ENCODE measurements at regions of chr1 and their contacts with region 1.

Region 1: GRCh38 chr1:113140588-113141446 is 67.8 kb downstream of the LRIG2 start:
- DNase-seq: peak; percentile 14 to 36
- ATAC-seq: peak; percentile 56 to 79
- H3K4me3 ChIP-seq: peak overlapping the region in 1 of 4 donors; percentile 23
- H3K27ac ChIP-seq: no peak overlapping the region
- H3K4me1 ChIP-seq: peaks cover 13 to 16% of the 10 kb centered on the region in 2 donors
- H3K27me3 ChIP-seq: no peaks in the 10 kb centered on the region
- CTCF ChIP-seq: peak; percentile 58 to 79 (median 71)
- POLR2A ChIP-seq: no peak

Region 2: DNA sequence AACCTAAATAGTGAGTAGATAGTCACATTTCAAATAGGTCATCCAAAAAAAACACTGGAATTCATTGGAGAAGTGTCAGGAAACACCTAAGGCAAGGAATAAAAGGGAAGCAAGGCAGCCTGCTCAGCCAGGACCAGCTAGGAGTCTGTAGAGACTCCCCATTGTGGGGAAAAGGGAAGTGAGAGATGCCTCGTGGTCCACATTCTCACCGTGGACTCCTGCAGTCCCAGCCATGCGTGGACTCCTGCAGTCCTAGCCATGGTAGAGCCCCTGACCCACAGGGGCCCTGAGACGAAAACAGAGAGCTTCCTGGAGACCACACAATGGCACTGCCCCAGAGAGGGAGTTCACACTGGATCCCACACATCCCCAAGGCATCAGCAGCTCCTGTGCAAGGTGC is 29.7 kb after region 1 on chr1:
- in situ Hi-C with region 1: no loop called
- intact Hi-C with region 1: no loop called
- DNase-seq: no peak
- ATAC-seq: no peak
- H3K4me3 ChIP-seq: no peak overlapping the region
- H3K27ac ChIP-seq: no peak overlapping the region
- H3K4me1 ChIP-seq: no peaks in the 10 kb centered on the region
- H3K27me3 ChIP-seq: no peaks in the 10 kb centered on the region
- CTCF ChIP-seq: no peak
- POLR2A ChIP-seq: no peak

Region 3: DNA sequence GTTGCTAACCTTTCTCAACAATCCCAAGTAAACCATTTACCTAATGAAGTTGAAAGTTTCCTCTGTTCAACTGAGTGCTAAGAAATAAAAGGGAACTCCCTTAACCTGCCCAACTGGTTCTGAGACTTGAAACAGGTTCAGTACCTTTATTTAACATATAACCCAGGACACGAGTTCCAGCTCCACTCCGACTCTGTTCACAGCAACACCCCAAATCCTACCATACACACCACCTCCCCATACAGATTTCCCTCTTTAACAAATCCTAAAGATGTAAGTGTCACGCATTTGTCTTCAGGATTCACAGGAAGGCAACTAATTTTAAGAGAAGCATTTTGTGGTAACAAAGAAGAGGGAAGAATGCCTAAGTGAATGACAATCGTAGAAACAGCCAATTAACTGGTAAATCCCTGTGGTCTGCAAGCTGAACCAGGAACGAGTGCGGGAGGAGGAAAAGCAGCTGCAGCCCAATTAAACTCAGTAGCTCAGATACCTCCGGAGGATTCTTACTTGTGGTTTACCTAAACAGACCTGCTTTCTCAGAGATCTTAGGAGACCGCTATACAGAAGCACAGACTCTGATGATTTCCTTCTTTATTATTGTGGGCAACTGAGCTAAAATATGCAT is 115.0 kb after region 1 on chr1:
- in situ Hi-C with region 1: no loop called
- intact Hi-C with region 1: no loop called
- DNase-seq: no peak
- ATAC-seq: no peak
- H3K4me3 ChIP-seq: no peak overlapping the region
- H3K27ac ChIP-seq: no peak overlapping the region
- H3K4me1 ChIP-seq: no peaks in the 10 kb centered on the region
- H3K27me3 ChIP-seq: no peaks in the 10 kb centered on the region
- CTCF ChIP-seq: no peak
- POLR2A ChIP-seq: no peak

Region 4: DNA sequence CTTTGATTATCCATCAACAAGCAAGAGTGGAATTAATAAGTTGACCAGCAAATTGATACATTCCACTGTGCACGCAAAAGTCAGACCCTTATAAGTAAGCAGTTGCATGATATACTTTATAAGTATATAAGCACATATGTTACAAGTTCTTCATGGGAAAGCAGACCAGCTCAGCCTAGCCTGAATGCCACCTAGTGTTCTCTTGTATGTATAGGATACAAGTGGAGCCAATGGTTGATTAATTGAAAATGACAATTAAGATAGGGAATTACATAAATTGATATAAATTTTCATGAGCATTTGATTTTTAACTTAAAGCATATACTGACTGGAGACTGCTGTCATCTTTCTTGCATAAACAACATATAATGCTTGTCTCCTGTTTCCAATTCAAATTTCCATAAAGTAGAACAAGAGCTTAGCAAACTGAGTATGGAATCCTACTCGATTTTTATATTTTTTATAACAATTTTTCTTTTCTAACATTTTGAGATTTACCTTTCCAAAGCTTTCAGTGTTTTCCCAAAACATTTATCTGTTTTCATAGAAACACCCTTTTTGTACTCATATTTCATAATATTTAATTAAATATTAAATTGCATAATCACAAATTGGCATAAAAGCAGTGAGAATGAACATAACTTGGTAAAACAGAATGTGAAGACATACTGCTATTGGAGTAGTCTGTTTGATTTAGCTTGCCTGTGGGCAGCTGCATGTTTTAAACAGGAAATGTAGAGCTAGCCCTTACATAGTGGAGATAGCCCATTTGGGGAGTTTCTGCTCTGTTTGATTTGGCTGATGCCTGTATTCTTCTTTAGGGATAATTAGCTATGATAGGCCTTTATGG is 312.3 kb after region 1 on chr1:
- in situ Hi-C with region 1: loop called in 1 of 4 experiments (anchors 25 kb)
- intact Hi-C with region 1: no loop called
- DNase-seq: no peak
- ATAC-seq: no peak
- H3K4me3 ChIP-seq: no peak overlapping the region
- H3K27ac ChIP-seq: no peak overlapping the region
- H3K4me1 ChIP-seq: peaks cover 4 to 7% of the 10 kb centered on the region in 2 donors
- H3K27me3 ChIP-seq: no peaks in the 10 kb centered on the region
- CTCF ChIP-seq: peak in 3 of 5 experiments; percentile 10 to 41 (median 36)
- POLR2A ChIP-seq: no peak

Region 5: GRCh38 chr1:113660088-113660487 is 519.3 kb after region 1 on chr1:
- in situ Hi-C with region 1: loop called in 1 of 4 experiments (anchors 10 kb)
- intact Hi-C with region 1: no loop called
- DNase-seq: no peak
- ATAC-seq: no peak
- H3K4me3 ChIP-seq: no peak overlapping the region
- H3K27ac ChIP-seq: no peak overlapping the region
- H3K4me1 ChIP-seq: peaks cover 12 to 17% of the 10 kb centered on the region in 2 donors
- H3K27me3 ChIP-seq: no peaks in the 10 kb centered on the region
- CTCF ChIP-seq: no peak
- POLR2A ChIP-seq: no peak

Region 6: DNA sequence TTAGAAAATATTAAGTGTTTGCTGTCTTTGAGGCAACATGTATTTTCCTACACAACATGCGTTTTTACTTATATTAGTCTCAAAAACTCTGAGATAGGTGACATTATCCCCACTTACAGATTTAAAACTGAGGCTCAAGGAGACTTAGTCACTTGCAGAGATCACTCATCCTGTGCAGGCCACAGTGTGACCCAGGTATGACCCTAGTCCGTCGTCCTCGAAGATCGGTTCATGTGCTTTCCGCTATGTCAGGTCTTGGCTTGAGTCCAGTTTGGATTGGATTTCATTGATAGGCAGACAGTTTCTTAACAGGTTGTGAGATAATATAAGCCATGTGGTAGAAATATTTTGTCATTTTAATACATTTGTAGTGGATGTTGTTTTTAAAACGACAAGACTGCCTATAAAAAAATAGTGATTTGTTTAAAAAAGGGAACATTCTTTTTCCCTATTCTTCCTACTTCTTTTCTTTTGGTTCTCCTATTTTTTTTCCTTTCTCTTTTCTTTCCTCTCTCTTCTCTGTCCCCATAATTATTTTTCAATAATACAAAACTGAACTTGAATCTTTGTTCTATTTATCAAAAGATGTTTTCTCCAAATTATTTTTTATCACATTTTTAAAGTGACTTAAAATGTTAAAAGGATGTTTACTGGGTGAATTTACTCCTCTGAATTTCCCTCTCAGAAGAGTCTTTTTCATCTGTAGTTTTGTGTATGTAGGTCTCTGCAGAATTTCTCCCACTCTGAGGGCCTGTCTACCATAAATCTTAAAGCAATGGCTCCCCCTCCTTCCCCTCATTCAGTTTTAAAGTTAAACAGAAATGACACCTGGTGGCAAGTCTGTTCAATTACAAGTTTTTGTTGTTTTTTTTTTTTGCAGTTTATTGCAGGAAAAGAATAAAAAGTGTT is 536.7 kb after region 1 on chr1:
- in situ Hi-C with region 1: loop called in 2 of 4 experiments (anchors 10 kb)
- intact Hi-C with region 1: loop called (anchors 1 kb)
- DNase-seq: peak; percentile 19 to 66
- ATAC-seq: peak; percentile 72 to 95
- H3K4me3 ChIP-seq: no peak overlapping the region
- H3K27ac ChIP-seq: no peak overlapping the region
- H3K4me1 ChIP-seq: peaks cover 7 to 8% of the 10 kb centered on the region in 2 donors
- H3K27me3 ChIP-seq: no peaks in the 10 kb centered on the region
- CTCF ChIP-seq: peak in 4 of 5 experiments; percentile 30 to 60 (median 52)
- POLR2A ChIP-seq: no peak

Region 7: GRCh38 chr1:113684153-113684541 is 543.3 kb after region 1 on chr1:
- in situ Hi-C with region 1: loop called in 3 of 4 experiments (anchors 5 to 10 kb)
- intact Hi-C with region 1: no loop called
- DNase-seq: peak in 1 of 2 donors; percentile 25
- ATAC-seq: peak in 1 of 2 donors; percentile 36
- H3K4me3 ChIP-seq: no peak overlapping the region
- H3K27ac ChIP-seq: no peak overlapping the region
- H3K4me1 ChIP-seq: no peaks in the 10 kb centered on the region
- H3K27me3 ChIP-seq: no peaks in the 10 kb centered on the region
- CTCF ChIP-seq: no peak
- POLR2A ChIP-seq: no peak